Activated CD4-positive, alpha-beta memory T cell treated with anti-CD3 and anti-CD28 coated beads for 36 hours (primary cell): ENCODE measurements at regions of chr17 and their contacts with region 1.

Region 1: GRCh38 chr17:7687908-7688807 is at the start of gene WRAP53:
- DNase-seq: peak; percentile 98
- H3K4me3 Mint-ChIP-seq: peak within 1 kb of the TSS; percentile 100
- H3K27ac Mint-ChIP-seq: peak within 1 kb of the TSS; percentile 100
- H3K4me1 Mint-ChIP-seq: peaks cover 31% of the 10 kb centered on the region
- H3K27me3 Mint-ChIP-seq: no peaks in the 10 kb centered on the region
- total RNA-seq, gene WRAP53: 20.2 to 23.3 TPM

Region 2: DNA sequence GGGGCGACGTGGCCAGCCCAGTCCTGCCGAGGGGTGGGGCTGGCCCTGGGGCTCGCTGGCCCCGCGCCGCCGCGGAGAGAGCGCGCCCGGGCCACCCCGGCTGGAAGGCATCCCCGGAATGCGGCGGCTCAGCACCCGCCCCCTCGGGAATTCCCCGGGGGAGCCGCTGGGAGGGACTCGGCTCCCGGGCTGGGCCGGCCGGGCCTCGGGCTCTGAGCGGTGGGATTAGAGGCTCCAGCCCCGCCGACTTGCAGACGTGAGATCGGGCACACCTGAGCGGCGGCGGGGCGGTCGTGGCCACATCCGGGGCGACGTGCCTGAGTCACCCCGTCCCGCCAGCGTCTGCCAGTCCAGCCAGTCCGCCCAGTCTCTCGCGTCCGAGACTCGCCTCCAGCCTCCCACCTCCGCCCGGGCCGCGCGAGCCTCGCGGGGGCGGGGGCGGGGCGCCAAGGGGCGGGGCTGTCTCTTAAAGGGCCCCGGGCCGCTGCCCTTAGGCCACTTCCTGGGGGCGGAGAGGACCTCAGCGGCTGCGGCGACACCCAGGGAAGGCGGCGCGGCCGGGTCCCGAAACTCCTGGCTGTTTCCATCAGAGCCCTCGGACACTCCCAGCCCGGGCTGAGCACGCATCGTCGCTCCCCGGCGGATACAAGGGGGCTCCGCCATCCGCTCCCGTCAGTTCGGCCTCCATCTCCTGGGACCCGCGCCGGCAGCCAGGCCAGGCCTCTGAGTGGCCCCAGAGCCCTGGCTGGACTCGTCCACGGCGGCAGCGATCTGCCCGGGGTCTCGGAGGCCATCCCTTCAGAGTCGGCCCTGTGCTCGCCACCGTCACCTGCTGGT is 336.3 kb before region 1 on chr17 and contains the start of gene KCTD11:
- CTCF ChIA-PET with region 1: interaction called, 10 read pairs
- POLR2A ChIA-PET with region 1: interaction called, 4 read pairs
- intact Hi-C with region 1: no loop called
- DNase-seq: peak; percentile 87
- H3K4me3 Mint-ChIP-seq: peak within 1 kb of the TSS; percentile 74
- H3K27ac Mint-ChIP-seq: peak within 1 kb of the TSS; percentile 68
- H3K4me1 Mint-ChIP-seq: peaks cover 39% of the 10 kb centered on the region
- H3K27me3 Mint-ChIP-seq: no peaks in the 10 kb centered on the region
- total RNA-seq, gene KCTD11: 2.6 to 2.8 TPM

Region 3: DNA sequence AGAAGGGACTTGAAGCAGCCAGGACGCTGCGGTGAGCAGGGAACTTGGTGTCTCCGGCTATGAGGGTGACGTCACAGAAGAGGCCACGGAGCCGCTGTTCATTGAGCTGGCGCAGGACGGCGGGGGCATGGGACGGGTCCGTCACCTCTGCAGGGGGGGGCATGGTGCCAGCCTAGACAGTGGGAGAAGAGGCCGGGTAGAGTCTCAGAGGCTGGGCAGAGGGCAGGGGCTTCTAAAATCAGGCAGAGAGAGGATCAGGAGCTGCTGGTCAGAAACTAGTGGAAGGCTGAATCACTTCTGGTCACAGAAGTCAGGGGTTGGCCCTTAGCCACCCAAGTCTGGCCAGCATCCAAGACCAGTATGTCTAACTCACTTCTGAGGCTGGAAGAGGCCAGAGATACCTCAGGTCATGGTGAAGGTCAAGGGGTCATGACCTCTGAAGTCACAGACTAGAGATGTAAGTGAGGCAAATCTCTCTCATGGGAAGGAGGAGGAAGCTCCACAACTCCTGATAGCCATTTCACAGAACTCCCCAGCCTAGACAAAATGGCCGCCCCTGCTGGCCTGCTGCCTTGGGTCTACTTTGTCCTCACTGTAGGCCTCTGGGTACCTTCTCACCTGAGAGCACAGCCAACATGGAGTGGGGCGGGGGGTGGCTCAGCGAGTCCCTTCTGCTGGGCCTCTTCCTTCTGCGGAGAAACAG is 221.4 kb before region 1 on chr17:
- CTCF ChIA-PET with region 1: no interaction called
- POLR2A ChIA-PET with region 1: no interaction called
- intact Hi-C with region 1: no loop called
- DNase-seq: no peak
- H3K4me3 Mint-ChIP-seq: no peak overlapping the region
- H3K27ac Mint-ChIP-seq: no peak overlapping the region
- H3K4me1 Mint-ChIP-seq: peaks cover 7% of the 10 kb centered on the region
- H3K27me3 Mint-ChIP-seq: no peaks in the 10 kb centered on the region

Region 4: GRCh38 chr17:7561028-7561575 is 127.1 kb before region 1 on chr17:
- CTCF ChIA-PET with region 1: interaction called, 15 read pairs
- POLR2A ChIA-PET with region 1: interaction called, 3 read pairs
- intact Hi-C with region 1: no loop called
- DNase-seq: peak; percentile 92
- H3K4me3 Mint-ChIP-seq: peak overlapping the region; percentile 91
- H3K27ac Mint-ChIP-seq: peak overlapping the region; percentile 91
- H3K4me1 Mint-ChIP-seq: peaks cover 32% of the 10 kb centered on the region
- H3K27me3 Mint-ChIP-seq: no peaks in the 10 kb centered on the region

Region 5: DNA sequence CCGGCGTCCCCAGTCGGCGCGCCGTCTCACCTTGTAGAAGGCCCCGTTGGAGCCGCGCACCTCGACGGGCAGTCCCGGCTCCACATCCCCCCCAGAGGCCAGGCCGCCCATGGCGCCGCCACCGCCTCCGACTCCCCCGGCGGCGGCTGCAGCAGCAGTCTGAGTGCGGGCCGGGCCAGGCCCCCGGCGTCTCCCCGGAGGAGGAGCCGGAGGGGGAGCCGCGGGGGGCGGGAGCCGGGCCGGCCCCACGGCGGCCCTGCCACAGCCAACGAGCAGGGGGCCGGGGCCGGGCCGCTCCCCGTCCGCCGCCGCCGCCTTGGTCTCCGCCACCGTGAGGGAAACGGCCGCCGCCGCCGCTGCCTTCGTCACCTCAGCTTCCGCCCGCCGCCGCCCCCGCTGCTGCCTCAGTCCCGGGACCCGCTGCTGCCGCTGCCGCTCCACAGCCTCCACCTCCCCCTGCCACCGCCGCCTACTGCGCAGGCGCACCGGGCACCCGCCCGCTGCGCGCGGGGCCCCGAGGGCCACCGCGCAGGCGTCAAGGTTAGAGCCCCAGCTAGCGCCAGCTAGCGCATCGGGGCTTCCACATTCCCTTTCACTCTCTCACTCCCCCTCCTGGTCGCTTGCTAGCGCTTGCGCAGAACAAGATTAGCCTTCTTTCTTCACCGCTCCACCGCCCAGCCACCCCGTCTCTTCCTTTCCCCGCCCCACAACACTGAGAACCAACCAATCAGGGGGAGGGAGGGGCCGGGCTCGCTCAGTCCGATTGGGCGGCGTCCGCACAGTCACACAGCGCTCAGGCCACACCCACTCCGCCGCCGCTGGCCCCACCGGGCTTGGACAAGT is 73.5 kb before region 1 on chr17 and contains the start of gene FXR2:
- CTCF ChIA-PET with region 1: interaction called, 38 read pairs
- POLR2A ChIA-PET with region 1: interaction called, 31 read pairs
- intact Hi-C with region 1: loop called (anchors 1 kb)
- DNase-seq: peak; percentile 100
- H3K4me3 Mint-ChIP-seq: peak within 1 kb of the TSS; percentile 87
- H3K27ac Mint-ChIP-seq: peak within 1 kb of the TSS; percentile 87
- H3K4me1 Mint-ChIP-seq: peaks cover 31% of the 10 kb centered on the region
- H3K27me3 Mint-ChIP-seq: no peaks in the 10 kb centered on the region
- total RNA-seq, gene FXR2: 37.5 to 40.1 TPM

Region 6: DNA sequence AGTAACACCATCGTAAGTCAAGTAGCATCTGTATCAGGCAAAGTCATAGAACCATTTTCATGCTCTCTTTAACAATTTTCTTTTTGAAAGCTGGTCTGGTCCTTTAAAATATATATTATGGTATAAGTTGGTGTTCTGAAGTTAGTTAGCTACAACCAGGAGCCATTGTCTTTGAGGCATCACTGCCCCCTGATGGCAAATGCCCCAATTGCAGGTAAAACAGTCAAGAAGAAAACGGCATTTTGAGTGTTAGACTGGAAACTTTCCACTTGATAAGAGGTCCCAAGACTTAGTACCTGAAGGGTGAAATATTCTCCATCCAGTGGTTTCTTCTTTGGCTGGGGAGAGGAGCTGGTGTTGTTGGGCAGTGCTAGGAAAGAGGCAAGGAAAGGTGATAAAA is 14.9 kb before region 1 on chr17:
- CTCF ChIA-PET with region 1: interaction called, 21 read pairs
- POLR2A ChIA-PET with region 1: interaction called, 6 read pairs
- intact Hi-C with region 1: no loop called
- DNase-seq: peak; percentile 68
- H3K4me3 Mint-ChIP-seq: no peak overlapping the region
- H3K27ac Mint-ChIP-seq: no peak overlapping the region
- H3K4me1 Mint-ChIP-seq: no peaks in the 10 kb centered on the region
- H3K27me3 Mint-ChIP-seq: no peaks in the 10 kb centered on the region

Region 7: DNA sequence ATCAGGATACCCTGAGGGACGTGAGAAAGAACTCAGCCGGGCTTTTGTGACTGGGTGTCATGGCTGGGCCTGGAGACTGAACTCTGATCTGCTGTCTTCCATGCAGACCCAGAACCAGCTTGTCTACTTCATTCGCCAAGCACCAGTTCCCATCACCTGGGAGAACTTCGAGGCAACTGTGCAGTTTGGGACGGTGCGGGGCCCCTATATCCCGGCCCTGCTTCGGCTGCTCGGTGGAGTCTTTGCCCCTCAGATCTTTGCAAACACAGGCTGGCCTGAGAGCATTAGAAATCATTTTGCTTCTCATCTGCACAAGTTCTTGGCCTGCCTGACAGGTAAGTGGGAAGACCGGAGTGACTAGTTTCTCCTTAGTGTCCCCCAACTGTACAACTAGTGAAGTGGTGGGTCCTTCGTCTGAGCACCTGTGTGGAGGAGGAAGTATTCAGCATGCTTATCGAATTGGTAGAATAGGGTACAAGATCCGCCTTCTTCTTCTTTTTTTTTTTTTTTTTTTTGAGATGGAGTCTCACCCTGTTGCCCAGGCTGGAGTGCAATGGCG is 44.9 kb after region 1 on chr17:
- CTCF ChIA-PET with region 1: no interaction called
- POLR2A ChIA-PET with region 1: no interaction called
- intact Hi-C with region 1: no loop called
- DNase-seq: no peak
- H3K4me3 Mint-ChIP-seq: no peak overlapping the region
- H3K27ac Mint-ChIP-seq: no peak overlapping the region
- H3K4me1 Mint-ChIP-seq: no peaks in the 10 kb centered on the region
- H3K27me3 Mint-ChIP-seq: peaks cover 1% of the 10 kb centered on the region

Region 8: GRCh38 chr17:7887482-7888183 is 199.5 kb after region 1 on chr17:
- CTCF ChIA-PET with region 1: interaction called, 6 read pairs
- POLR2A ChIA-PET with region 1: no interaction called
- intact Hi-C with region 1: loop called (anchors 1 kb)
- DNase-seq: peak; percentile 95
- H3K4me3 Mint-ChIP-seq: no peak overlapping the region
- H3K27ac Mint-ChIP-seq: no peak overlapping the region
- H3K4me1 Mint-ChIP-seq: no peaks in the 10 kb centered on the region
- H3K27me3 Mint-ChIP-seq: no peaks in the 10 kb centered on the region